ENCODE measurements at regions of chr19 and their contacts with region 1.

Region 1: GRCh38 chr19:17605761-17606745 is 50.6 kb downstream of the COLGALT1 start:
- DNase-seq: peak; percentile 95
- ATAC-seq: peak; percentile 72
- H3K4me3 Mint-ChIP-seq: peak overlapping the region; percentile 75
- H3K27ac Mint-ChIP-seq: peak overlapping the region; percentile 94
- H3K4me1 Mint-ChIP-seq: peaks cover 22% of the 10 kb centered on the region
- H3K27me3 Mint-ChIP-seq: peaks cover 19% of the 10 kb centered on the region
- CTCF ChIP-seq: peak; percentile 50; the same call in 1 of the 2 replicates

Region 2: DNA sequence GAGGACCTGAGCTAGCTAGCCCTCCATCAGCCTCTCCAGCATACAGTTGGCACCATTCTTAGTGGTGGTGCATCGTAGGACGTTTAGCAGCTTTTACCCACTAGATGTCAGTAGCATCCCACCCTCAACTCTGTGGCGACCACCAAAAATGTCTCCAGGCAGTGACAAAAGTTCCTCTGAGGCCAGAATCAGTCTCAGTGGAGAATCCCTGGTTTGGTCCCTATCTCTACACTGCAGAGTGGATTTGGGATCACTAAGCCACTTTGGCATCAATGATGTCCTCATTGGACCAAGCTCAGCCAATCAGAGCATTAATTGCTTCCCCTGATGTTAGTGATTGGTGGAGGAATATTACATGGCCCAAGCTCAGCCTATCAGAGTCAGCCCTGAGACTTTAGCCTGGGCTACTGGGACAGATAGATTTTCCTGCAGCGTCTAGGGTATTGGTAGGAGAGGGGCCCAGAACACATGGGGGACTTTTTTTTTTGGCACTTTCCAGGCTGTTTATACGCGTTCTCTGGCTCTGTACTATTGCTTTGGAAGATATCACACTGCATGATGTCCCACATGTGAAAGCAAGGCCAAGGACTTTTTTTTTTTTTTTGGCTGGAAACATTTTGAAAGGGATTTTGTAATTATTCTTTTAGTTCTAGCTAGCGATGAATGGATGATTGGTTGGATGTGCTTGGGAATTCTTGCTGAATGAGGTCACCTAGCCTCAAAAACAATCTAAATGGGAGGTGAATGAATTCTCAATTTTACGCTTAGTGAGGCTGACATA is 164.6 kb before region 1 on chr19:
- CTCF ChIA-PET with region 1: interaction called, 14 read pairs
- POLR2A ChIA-PET with region 1: no interaction called
- DNase-seq: peak; percentile 41
- ATAC-seq: peak; percentile 88
- H3K4me3 Mint-ChIP-seq: no peak overlapping the region
- H3K27ac Mint-ChIP-seq: no peak overlapping the region
- H3K4me1 Mint-ChIP-seq: no peaks in the 10 kb centered on the region
- H3K27me3 Mint-ChIP-seq: peaks cover 8% of the 10 kb centered on the region
- CTCF ChIP-seq: no peak; the same call in 1 of the 2 replicates

Region 3: GRCh38 chr19:17496337-17496997 is 109.6 kb before region 1 on chr19:
- CTCF ChIA-PET with region 1: interaction called, 39 read pairs
- POLR2A ChIA-PET with region 1: no interaction called
- DNase-seq: peak; percentile 90
- ATAC-seq: peak; percentile 85
- H3K4me3 Mint-ChIP-seq: peak overlapping the region; percentile 74
- H3K27ac Mint-ChIP-seq: no peak overlapping the region
- H3K4me1 Mint-ChIP-seq: peaks cover 16% of the 10 kb centered on the region
- H3K27me3 Mint-ChIP-seq: peaks cover 23% of the 10 kb centered on the region
- CTCF ChIP-seq: peak; percentile 92

Region 4: GRCh38 chr19:17579661-17580244 is 26.3 kb before region 1 on chr19:
- CTCF ChIA-PET with region 1: interaction called, 71 read pairs
- POLR2A ChIA-PET with region 1: interaction called, 15 read pairs
- DNase-seq: peak; percentile 93
- ATAC-seq: peak; percentile 71
- H3K4me3 Mint-ChIP-seq: peak overlapping the region; percentile 60
- H3K27ac Mint-ChIP-seq: peak overlapping the region; percentile 97
- H3K4me1 Mint-ChIP-seq: peaks cover 25% of the 10 kb centered on the region
- H3K27me3 Mint-ChIP-seq: no peaks in the 10 kb centered on the region
- CTCF ChIP-seq: no peak

Region 5: GRCh38 chr19:17623224-17623935 is 17.3 kb after region 1 on chr19:
- CTCF ChIA-PET with region 1: interaction called, 36 read pairs
- POLR2A ChIA-PET with region 1: no interaction called
- DNase-seq: no peak
- ATAC-seq: 0 out of 2 replicates have a peak, but pooled peaks have one; percentile 28
- H3K4me3 Mint-ChIP-seq: no peak overlapping the region
- H3K27ac Mint-ChIP-seq: no peak overlapping the region
- H3K4me1 Mint-ChIP-seq: no peaks in the 10 kb centered on the region
- H3K27me3 Mint-ChIP-seq: no peaks in the 10 kb centered on the region
- CTCF ChIP-seq: no peak

Region 6: GRCh38 chr19:17766543-17767131 is 160.6 kb after region 1 on chr19:
- CTCF ChIA-PET with region 1: interaction called, 37 read pairs
- POLR2A ChIA-PET with region 1: interaction called, 5 read pairs
- DNase-seq: peak; percentile 94
- ATAC-seq: peak; percentile 79
- H3K4me3 Mint-ChIP-seq: peak overlapping the region; percentile 41
- H3K27ac Mint-ChIP-seq: no peak overlapping the region
- H3K4me1 Mint-ChIP-seq: peaks cover 12% of the 10 kb centered on the region
- H3K27me3 Mint-ChIP-seq: no peaks in the 10 kb centered on the region
- CTCF ChIP-seq: peak; percentile 59; the same call in 1 of the 2 replicates

Measured in WTC11 (cell line).